MCF 10A (cell line): ENCODE measurements at regions of chr15 and their contacts with region 1.

Region 1: DNA sequence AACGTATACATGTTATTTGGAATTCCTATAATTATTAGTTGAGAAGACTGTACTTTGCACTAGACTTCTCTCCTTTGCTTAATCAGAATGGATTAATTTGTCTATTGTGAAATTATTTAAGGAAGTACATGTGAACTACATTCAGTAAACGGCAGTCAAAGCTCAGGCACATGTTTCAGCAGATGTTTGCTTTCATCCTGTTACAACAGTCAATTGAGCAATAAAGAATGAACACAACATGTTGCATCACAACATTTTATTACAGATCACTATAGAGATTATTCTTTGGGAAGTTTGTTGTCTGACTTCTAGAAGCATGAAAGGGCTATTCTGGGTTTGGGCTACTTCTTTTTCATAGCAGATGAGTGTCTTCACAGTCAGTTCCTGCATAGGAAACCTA is 39.2 kb downstream of the RAB27A start:
- DNase-seq: peak; percentile 89
- H3K4me3 Mint-ChIP-seq: no peak overlapping the region
- H3K27ac Mint-ChIP-seq: peak overlapping the region; percentile 92
- H3K4me1 Mint-ChIP-seq: peaks cover 43% of the 10 kb centered on the region
- H3K27me3 Mint-ChIP-seq: no peaks in the 10 kb centered on the region
- CTCF ChIP-seq: no peak

Region 2: GRCh38 chr15:55196458-55197361 is 53.7 kb before region 1 on chr15 and contains the start of gene RSL24D1:
- CTCF ChIA-PET with region 1: no interaction called
- POLR2A ChIA-PET with region 1: interaction called, 13 read pairs
- intact Hi-C with region 1: no loop called
- DNase-seq: peak; percentile 99
- H3K4me3 Mint-ChIP-seq: no peak within 1 kb of the TSS
- H3K27ac Mint-ChIP-seq: no peak within 1 kb of the TSS
- H3K4me1 Mint-ChIP-seq: peaks cover 18% of the 10 kb centered on the region
- H3K27me3 Mint-ChIP-seq: no peaks in the 10 kb centered on the region
- CTCF ChIP-seq: peak; percentile 22
- total RNA-seq, gene RSL24D1: 162 and 167 TPM in 2 replicates

Region 3: GRCh38 chr15:55221090-55222011 is 29.0 kb before region 1 on chr15:
- CTCF ChIA-PET with region 1: interaction called, 9 read pairs
- POLR2A ChIA-PET with region 1: interaction called, 19 read pairs
- intact Hi-C with region 1: loop called (anchors 2 kb)
- DNase-seq: peak; percentile 90
- H3K4me3 Mint-ChIP-seq: peak overlapping the region; percentile 34
- H3K27ac Mint-ChIP-seq: peak overlapping the region; percentile 91
- H3K4me1 Mint-ChIP-seq: peaks cover 22% of the 10 kb centered on the region
- H3K27me3 Mint-ChIP-seq: no peaks in the 10 kb centered on the region
- CTCF ChIP-seq: no peak

Region 4: GRCh38 chr15:55279746-55280351 is 29.5 kb after region 1 on chr15:
- CTCF ChIA-PET with region 1: interaction called, 3 read pairs
- POLR2A ChIA-PET with region 1: interaction called, 34 read pairs
- intact Hi-C with region 1: no loop called
- DNase-seq: peak; percentile 87
- H3K4me3 Mint-ChIP-seq: no peak overlapping the region
- H3K27ac Mint-ChIP-seq: peak overlapping the region; percentile 69
- H3K4me1 Mint-ChIP-seq: peaks cover 27% of the 10 kb centered on the region
- H3K27me3 Mint-ChIP-seq: no peaks in the 10 kb centered on the region
- CTCF ChIP-seq: no peak

Region 5: DNA sequence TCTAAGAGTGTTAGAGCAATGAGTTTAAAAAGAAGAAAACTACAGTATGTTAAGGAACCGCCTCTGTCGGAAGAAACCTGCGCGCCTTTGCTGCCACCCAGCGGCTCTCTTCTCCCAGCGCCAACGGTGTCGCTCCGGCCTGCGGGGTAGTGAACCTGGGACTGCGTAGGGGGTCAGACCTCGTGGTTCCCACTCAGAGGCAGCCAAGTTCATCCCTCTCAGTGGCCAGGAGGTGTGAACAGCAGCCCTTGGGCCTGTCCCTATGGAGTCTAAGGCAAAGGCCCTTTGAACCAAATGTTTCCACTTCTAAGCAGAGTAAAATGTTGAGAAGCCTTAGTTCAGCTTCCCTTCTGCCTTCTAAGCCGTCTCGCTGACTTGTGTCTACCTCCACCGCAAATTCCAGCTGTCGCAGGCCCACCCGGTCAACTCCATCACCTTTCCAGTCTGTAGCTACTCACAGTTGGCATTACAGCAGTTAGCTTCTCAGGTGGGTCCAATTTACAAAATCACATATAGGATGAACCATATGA is 40.2 kb after region 1 on chr15:
- CTCF ChIA-PET with region 1: interaction called, 5 read pairs
- POLR2A ChIA-PET with region 1: interaction called, 18 read pairs
- intact Hi-C with region 1: loop called (anchors 1 kb)
- DNase-seq: peak; percentile 84
- H3K4me3 Mint-ChIP-seq: peak overlapping the region; percentile 89
- H3K27ac Mint-ChIP-seq: peak overlapping the region; percentile 92
- H3K4me1 Mint-ChIP-seq: peaks cover 15% of the 10 kb centered on the region
- H3K27me3 Mint-ChIP-seq: no peaks in the 10 kb centered on the region
- CTCF ChIP-seq: peak; percentile 84

Region 6: DNA sequence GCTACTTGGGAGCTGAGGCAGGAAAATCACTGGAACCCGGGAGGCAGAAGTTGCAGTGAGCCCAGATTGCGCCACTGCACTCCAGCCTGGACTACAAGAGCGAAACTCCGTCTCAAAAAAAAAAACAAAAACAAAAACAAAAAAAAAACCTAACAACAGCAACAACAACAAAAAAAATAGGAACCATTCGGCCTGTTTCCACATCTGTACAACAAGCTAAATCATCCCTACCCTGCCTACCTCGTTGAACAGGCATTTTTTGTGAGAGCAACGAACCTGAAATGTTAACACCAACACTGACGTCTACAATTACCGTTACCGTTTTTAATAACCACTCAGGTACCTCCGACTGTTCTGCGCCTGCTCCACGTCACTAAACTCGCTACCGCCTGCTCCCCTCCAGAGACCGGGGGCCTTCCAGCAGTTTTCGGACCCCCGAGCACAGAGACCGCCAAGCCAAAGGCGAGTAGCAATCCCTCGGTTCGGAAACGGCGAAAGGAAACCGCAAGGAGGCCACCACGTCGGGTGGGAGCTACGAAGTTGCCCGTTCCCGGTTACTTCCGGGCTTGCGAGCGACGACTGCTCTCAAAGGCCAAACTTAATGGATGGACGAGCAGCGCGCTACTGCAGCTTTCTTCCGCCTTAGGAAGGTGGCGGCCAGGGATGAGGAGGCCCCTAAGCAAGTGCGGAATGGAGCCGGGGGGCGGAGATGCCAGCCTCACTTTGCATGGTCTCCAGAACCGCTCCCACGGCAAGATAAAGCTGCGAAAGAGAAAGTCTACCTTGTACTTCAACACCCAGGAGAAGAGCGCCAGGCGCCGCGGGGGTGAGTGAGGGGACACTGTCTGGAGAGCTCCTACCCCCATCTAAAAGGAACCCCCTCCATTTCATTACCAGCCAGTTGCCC is 68.4 kb after region 1 on chr15 and contains the starts of genes PIGB and PIGBOS1:
- CTCF ChIA-PET with region 1: interaction called, 3 read pairs
- POLR2A ChIA-PET with region 1: interaction called, 16 read pairs
- intact Hi-C with region 1: no loop called
- DNase-seq: peak; percentile 86
- H3K4me3 Mint-ChIP-seq: peak within 1 kb of the TSS; percentile 93
- H3K27ac Mint-ChIP-seq: peak within 1 kb of the TSS; percentile 98
- H3K4me1 Mint-ChIP-seq: peaks cover 15% of the 10 kb centered on the region
- H3K27me3 Mint-ChIP-seq: no peaks in the 10 kb centered on the region
- CTCF ChIP-seq: no peak
- total RNA-seq, gene PIGB: 16.2 and 22.2 TPM in 2 replicates
- total RNA-seq, gene PIGBOS1: 13.9 and 16.1 TPM in 2 replicates